Esophagus squamous epithelium (tissue), 5 donors: ENCODE measurements at regions of chr21 and their contacts with region 1.

Region 1: GRCh38 chr21:45820171-45821091 is 161.1 kb upstream of the COL6A1 start:
- DNase-seq: no peak
- H3K4me3 ChIP-seq: no peak overlapping the region
- H3K27ac ChIP-seq: no peak overlapping the region
- H3K4me1 ChIP-seq: peaks cover 0 to 4% (median 0%) of the 10 kb centered on the region in 3 donors
- H3K27me3 ChIP-seq: peaks cover 0 to 46% (median 0%) of the 10 kb centered on the region in 4 donors
- CTCF ChIP-seq: peak; percentile 51 to 85 (median 77)
- POLR2A ChIP-seq: no peak

Region 2: DNA sequence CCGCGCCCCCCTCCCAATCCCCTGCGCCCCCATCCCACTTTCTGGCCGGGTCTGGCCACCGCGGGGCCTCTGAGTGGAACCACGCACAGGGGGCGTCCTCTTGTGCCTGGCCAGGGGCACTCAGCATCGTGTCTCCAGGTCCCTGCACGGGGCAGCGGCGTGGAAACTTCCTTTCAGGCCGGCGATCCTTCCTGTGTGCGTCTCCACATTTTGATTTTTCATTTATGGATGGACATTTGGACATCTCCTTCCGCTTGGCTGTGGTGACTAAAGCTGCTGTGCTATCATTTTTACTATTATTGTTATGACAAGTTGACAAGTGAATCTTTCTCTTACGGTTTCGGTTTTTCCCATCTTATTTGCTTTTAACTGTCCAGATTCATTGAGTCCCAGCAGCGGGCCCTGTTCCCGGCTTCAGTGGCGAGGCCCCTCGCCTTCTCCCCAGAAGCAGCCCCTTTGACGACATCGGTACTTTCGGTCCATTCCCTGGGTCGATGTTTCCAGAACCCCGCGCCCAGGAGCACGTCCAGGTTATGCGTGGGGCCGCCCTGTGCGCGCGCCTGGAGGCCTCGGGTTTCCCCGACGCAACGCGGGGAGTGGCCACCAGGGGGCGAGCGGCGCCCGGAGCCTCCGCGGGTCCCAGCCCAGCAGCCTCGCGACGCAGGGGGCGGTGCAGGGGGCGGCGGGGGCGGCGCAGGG is 265.8 kb before region 1 on chr21:
- intact Hi-C with region 1: loop called (anchors 5 kb)
- DNase-seq: no peak
- H3K4me3 ChIP-seq: peak overlapping the region; percentile 30 to 82 (median 52)
- H3K27ac ChIP-seq: peak overlapping the region; percentile 44 to 83 (median 52)
- H3K4me1 ChIP-seq: peaks cover 6 to 44% (median 15%) of the 10 kb centered on the region in 3 donors
- H3K27me3 ChIP-seq: peaks cover 0 to 47% (median 0%) of the 10 kb centered on the region in 4 donors
- CTCF ChIP-seq: peak; percentile 76 to 93 (median 90)
- POLR2A ChIP-seq: peak in 1 of 4 donors; percentile 50

Region 3: GRCh38 chr21:45880097-45881068 is 60.0 kb after region 1 on chr21:
- intact Hi-C with region 1: loop called (anchors 10 kb)
- DNase-seq: no peak
- H3K4me3 ChIP-seq: no peak overlapping the region
- H3K27ac ChIP-seq: no peak overlapping the region
- H3K4me1 ChIP-seq: peaks cover 1 to 14% (median 3%) of the 10 kb centered on the region in 3 donors
- H3K27me3 ChIP-seq: peaks cover 0 to 39% (median 0%) of the 10 kb centered on the region in 4 donors
- CTCF ChIP-seq: peak; percentile 34 to 69 (median 46)
- POLR2A ChIP-seq: no peak